ENCODE measurements at regions of chr7 and their contacts with region 1.

Region 1: GRCh38 chr7:85554236-85555178 is 367.7 kb upstream of the SEMA3D start:
- DNase-seq: no peak
- ATAC-seq: peak; percentile 55; the same call in 1 of the 2 replicates
- H3K4me3 Mint-ChIP-seq: no peak overlapping the region
- H3K27ac Mint-ChIP-seq: no peak overlapping the region
- H3K4me1 Mint-ChIP-seq: no peaks in the 10 kb centered on the region
- H3K27me3 Mint-ChIP-seq: no peaks in the 10 kb centered on the region
- CTCF ChIP-seq: peak; percentile 64

Region 2: GRCh38 chr7:85041605-85042216 is 512.8 kb before region 1 on chr7:
- CTCF ChIA-PET with region 1: interaction called, 10 read pairs
- POLR2A ChIA-PET with region 1: no interaction called
- DNase-seq: peak; percentile 78
- ATAC-seq: peak; percentile 96
- H3K4me3 Mint-ChIP-seq: no peak overlapping the region
- H3K27ac Mint-ChIP-seq: no peak overlapping the region
- H3K4me1 Mint-ChIP-seq: peaks cover 5% of the 10 kb centered on the region
- H3K27me3 Mint-ChIP-seq: no peaks in the 10 kb centered on the region
- CTCF ChIP-seq: peak; percentile 66

Region 3: GRCh38 chr7:85583131-85583953 is 28.8 kb after region 1 on chr7:
- CTCF ChIA-PET with region 1: no interaction called
- POLR2A ChIA-PET with region 1: no interaction called
- DNase-seq: no peak
- ATAC-seq: no peak
- H3K4me3 Mint-ChIP-seq: no peak overlapping the region
- H3K27ac Mint-ChIP-seq: no peak overlapping the region
- H3K4me1 Mint-ChIP-seq: no peaks in the 10 kb centered on the region
- H3K27me3 Mint-ChIP-seq: no peaks in the 10 kb centered on the region
- CTCF ChIP-seq: no peak

Measured in WTC11 (cell line).